CD8-positive, alpha-beta memory T cell (primary cell): ENCODE measurements at regions of chr2 and their contacts with region 1.

Region 1: DNA sequence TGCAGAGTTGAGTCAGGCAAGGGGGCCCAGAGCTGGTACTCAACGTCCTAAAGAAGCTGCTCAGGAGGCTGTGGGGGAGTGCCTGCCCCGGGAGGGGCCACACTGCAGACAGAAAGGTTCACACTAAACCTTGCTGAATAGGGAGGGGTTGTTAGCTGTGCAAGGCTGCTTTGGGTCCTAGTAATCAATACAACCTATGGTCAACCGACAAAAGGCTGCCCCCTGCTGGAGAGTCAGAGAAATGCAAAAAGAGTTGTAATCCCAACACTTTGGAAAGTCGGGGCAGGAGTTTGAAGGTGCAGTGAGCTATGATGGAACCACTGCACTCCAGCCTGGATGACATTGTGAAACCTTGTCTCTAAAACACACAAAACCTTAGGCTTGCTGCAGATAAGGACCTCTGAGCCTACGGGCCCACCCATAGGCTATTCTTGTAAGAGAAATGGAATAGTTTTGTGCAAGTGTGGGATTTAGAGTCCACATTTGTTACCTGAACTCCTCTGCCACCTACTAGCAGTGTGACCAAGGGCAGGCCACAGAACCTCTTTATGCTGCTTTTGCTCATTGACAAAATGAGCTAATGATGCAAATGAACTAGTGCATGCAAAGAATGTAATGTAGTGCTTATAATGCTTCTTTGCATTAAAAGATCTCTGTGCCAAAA is 81.5 kb downstream of the PRPF40A start:
- DNase-seq: peak; percentile 47 to 73 (median 54)
- H3K4me3 ChIP-seq: no peak overlapping the region
- H3K4me3 Mint-ChIP-seq: no peak overlapping the region
- H3K27ac ChIP-seq: no peak overlapping the region
- H3K27ac Mint-ChIP-seq: peak overlapping the region in 1 of 8 donors; percentile 79
- H3K4me1 ChIP-seq: no peaks in the 10 kb centered on the region
- H3K4me1 Mint-ChIP-seq: peaks cover 3 to 6% (median 4%) of the 10 kb centered on the region in 3 donors
- H3K27me3 ChIP-seq: no peaks in the 10 kb centered on the region
- H3K27me3 Mint-ChIP-seq: peaks cover 0 to 21% of the 10 kb centered on the region in 2 donors

Region 2: GRCh38 chr2:152025678-152026287 is 610.0 kb before region 1 on chr2:
- CTCF ChIA-PET with region 1: interaction called, 11 read pairs
- POLR2A ChIA-PET with region 1: no interaction called
- DNase-seq: peak; percentile 61 to 77 (median 70)
- H3K4me3 ChIP-seq: peak overlapping the region; percentile 69
- H3K4me3 Mint-ChIP-seq: peak overlapping the region; percentile 31 to 84 (median 82)
- H3K27ac ChIP-seq: no peak overlapping the region
- H3K27ac Mint-ChIP-seq: peak overlapping the region in 3 of 8 donors; percentile 20 to 72 (median 23)
- H3K4me1 ChIP-seq: no peaks in the 10 kb centered on the region
- H3K4me1 Mint-ChIP-seq: peaks cover 6 to 9% (median 9%) of the 10 kb centered on the region in 3 donors
- H3K27me3 ChIP-seq: no peaks in the 10 kb centered on the region
- H3K27me3 Mint-ChIP-seq: peaks cover 4 to 9% of the 10 kb centered on the region in 2 donors

Region 3: GRCh38 chr2:152175458-152176325 is 460.1 kb before region 1 on chr2 and contains the start of gene STAM2:
- CTCF ChIA-PET with region 1: interaction called, 46 read pairs
- POLR2A ChIA-PET with region 1: interaction called, 3 read pairs
- DNase-seq: peak; percentile 78 to 93 (median 90)
- H3K4me3 ChIP-seq: peak within 1 kb of the TSS; percentile 82
- H3K4me3 Mint-ChIP-seq: peak within 1 kb of the TSS; percentile 95 to 100 (median 97)
- H3K27ac ChIP-seq: peak within 1 kb of the TSS; percentile 97
- H3K27ac Mint-ChIP-seq: peak within 1 kb of the TSS; percentile 98 to 100 (median 99)
- H3K4me1 ChIP-seq: peaks cover 29% of the 10 kb centered on the region
- H3K4me1 Mint-ChIP-seq: peaks cover 35 to 45% (median 45%) of the 10 kb centered on the region in 3 donors
- H3K27me3 ChIP-seq: no peaks in the 10 kb centered on the region
- H3K27me3 Mint-ChIP-seq: peaks cover 2% of the 10 kb centered on the region in 2 donors
- total RNA-seq, gene STAM2: 19.6 to 19.8 TPM

Region 4: GRCh38 chr2:152606081-152606480 is 29.7 kb before region 1 on chr2:
- CTCF ChIA-PET with region 1: no interaction called
- POLR2A ChIA-PET with region 1: no interaction called
- DNase-seq: no peak
- H3K4me3 ChIP-seq: no peak overlapping the region
- H3K4me3 Mint-ChIP-seq: no peak overlapping the region
- H3K27ac ChIP-seq: no peak overlapping the region
- H3K27ac Mint-ChIP-seq: no peak overlapping the region
- H3K4me1 ChIP-seq: no peaks in the 10 kb centered on the region
- H3K4me1 Mint-ChIP-seq: peaks cover 0 to 5% (median 0%) of the 10 kb centered on the region in 3 donors
- H3K27me3 ChIP-seq: no peaks in the 10 kb centered on the region
- H3K27me3 Mint-ChIP-seq: peaks cover 10 to 13% of the 10 kb centered on the region in 2 donors

Region 5: GRCh38 chr2:152647552-152647951 is 11.8 kb after region 1 on chr2:
- CTCF ChIA-PET with region 1: interaction called, 26 read pairs
- POLR2A ChIA-PET with region 1: no interaction called
- DNase-seq: no peak
- H3K4me3 ChIP-seq: no peak overlapping the region
- H3K4me3 Mint-ChIP-seq: no peak overlapping the region
- H3K27ac ChIP-seq: no peak overlapping the region
- H3K27ac Mint-ChIP-seq: peak overlapping the region in 4 of 8 donors; percentile 18 to 93 (median 24)
- H3K4me1 ChIP-seq: no peaks in the 10 kb centered on the region
- H3K4me1 Mint-ChIP-seq: no peaks in the 10 kb centered on the region
- H3K27me3 ChIP-seq: no peaks in the 10 kb centered on the region
- H3K27me3 Mint-ChIP-seq: peaks cover 0 to 1% of the 10 kb centered on the region in 2 donors

Region 6: GRCh38 chr2:153020201-153020600 is 384.4 kb after region 1 on chr2:
- CTCF ChIA-PET with region 1: no interaction called
- POLR2A ChIA-PET with region 1: no interaction called
- DNase-seq: no peak
- H3K4me3 ChIP-seq: no peak overlapping the region
- H3K4me3 Mint-ChIP-seq: no peak overlapping the region
- H3K27ac ChIP-seq: no peak overlapping the region
- H3K27ac Mint-ChIP-seq: no peak overlapping the region
- H3K4me1 ChIP-seq: no peaks in the 10 kb centered on the region
- H3K4me1 Mint-ChIP-seq: no peaks in the 10 kb centered on the region
- H3K27me3 ChIP-seq: no peaks in the 10 kb centered on the region
- H3K27me3 Mint-ChIP-seq: peaks cover 0 to 1% of the 10 kb centered on the region in 2 donors